MCF 10A (cell line): ENCODE measurements at regions of chr7 and their contacts with region 1.

Region 1: DNA sequence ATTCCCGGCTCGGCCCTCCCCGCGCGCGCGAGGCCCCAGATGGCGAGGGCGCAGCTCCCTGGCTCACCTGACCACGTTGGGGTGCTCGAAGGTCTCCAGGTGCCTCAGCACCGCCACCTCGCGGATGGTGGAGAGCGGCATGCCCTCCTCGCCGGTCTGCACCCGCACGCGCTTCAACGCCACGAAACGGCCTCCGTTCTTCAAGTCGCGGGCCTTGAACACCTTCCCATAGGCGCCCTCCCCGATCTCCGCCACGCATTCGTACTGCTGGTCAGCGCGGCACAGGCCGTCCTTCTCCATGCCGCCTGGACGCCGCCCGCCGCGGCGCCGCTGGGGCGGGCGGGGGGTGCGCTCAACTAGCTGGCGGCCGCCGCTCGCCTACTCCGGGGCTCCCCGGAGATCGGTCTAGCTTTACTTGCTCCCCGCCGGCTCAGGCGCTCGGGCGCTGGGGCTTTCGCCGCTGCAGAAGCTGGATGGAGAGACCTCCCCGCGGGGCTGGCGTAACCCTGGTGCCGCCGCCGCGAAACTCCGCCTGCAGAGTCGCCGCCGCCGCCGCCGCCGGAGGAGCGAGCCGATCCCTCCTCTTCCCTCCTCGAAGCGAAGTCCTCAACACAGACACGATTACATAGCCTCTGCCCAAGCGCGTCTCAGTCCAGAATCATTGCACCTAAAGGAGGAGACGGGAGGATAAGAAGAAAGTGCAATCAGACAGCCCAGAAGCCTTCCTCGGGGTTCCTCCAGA is 3.2 kb downstream of the CDK6 start:
- DNase-seq: peak; percentile 91
- H3K4me3 Mint-ChIP-seq: peak overlapping the region; percentile 83
- H3K27ac Mint-ChIP-seq: peak overlapping the region; percentile 74
- H3K4me1 Mint-ChIP-seq: peaks cover 36% of the 10 kb centered on the region
- H3K27me3 Mint-ChIP-seq: no peaks in the 10 kb centered on the region
- CTCF ChIP-seq: peak; percentile 91

Region 2: GRCh38 chr7:92621026-92621540 is 212.1 kb before region 1 on chr7:
- CTCF ChIA-PET with region 1: interaction called, 48 read pairs
- POLR2A ChIA-PET with region 1: interaction called, 6 read pairs
- intact Hi-C with region 1: loop called (anchors 1 kb)
- DNase-seq: peak; percentile 81
- H3K4me3 Mint-ChIP-seq: peak overlapping the region; percentile 47
- H3K27ac Mint-ChIP-seq: no peak overlapping the region
- H3K4me1 Mint-ChIP-seq: peaks cover 22% of the 10 kb centered on the region
- H3K27me3 Mint-ChIP-seq: no peaks in the 10 kb centered on the region
- CTCF ChIP-seq: peak; percentile 75

Region 3: GRCh38 chr7:92768501-92769393 is 64.4 kb before region 1 on chr7:
- CTCF ChIA-PET with region 1: interaction called, 13 read pairs
- POLR2A ChIA-PET with region 1: interaction called, 19 read pairs
- intact Hi-C with region 1: loop called (anchors 5 kb)
- DNase-seq: peak; percentile 44
- H3K4me3 Mint-ChIP-seq: no peak overlapping the region
- H3K27ac Mint-ChIP-seq: peak overlapping the region; percentile 98
- H3K4me1 Mint-ChIP-seq: peaks cover 47% of the 10 kb centered on the region
- H3K27me3 Mint-ChIP-seq: no peaks in the 10 kb centered on the region
- CTCF ChIP-seq: no peak

Region 4: GRCh38 chr7:92809397-92810241 is 23.6 kb before region 1 on chr7:
- CTCF ChIA-PET with region 1: interaction called, 5 read pairs
- POLR2A ChIA-PET with region 1: interaction called, 12 read pairs
- intact Hi-C with region 1: no loop called
- DNase-seq: peak; percentile 96
- H3K4me3 Mint-ChIP-seq: peak overlapping the region; percentile 35
- H3K27ac Mint-ChIP-seq: peak overlapping the region; percentile 82
- H3K4me1 Mint-ChIP-seq: peaks cover 48% of the 10 kb centered on the region
- H3K27me3 Mint-ChIP-seq: no peaks in the 10 kb centered on the region
- CTCF ChIP-seq: no peak

Region 5: DNA sequence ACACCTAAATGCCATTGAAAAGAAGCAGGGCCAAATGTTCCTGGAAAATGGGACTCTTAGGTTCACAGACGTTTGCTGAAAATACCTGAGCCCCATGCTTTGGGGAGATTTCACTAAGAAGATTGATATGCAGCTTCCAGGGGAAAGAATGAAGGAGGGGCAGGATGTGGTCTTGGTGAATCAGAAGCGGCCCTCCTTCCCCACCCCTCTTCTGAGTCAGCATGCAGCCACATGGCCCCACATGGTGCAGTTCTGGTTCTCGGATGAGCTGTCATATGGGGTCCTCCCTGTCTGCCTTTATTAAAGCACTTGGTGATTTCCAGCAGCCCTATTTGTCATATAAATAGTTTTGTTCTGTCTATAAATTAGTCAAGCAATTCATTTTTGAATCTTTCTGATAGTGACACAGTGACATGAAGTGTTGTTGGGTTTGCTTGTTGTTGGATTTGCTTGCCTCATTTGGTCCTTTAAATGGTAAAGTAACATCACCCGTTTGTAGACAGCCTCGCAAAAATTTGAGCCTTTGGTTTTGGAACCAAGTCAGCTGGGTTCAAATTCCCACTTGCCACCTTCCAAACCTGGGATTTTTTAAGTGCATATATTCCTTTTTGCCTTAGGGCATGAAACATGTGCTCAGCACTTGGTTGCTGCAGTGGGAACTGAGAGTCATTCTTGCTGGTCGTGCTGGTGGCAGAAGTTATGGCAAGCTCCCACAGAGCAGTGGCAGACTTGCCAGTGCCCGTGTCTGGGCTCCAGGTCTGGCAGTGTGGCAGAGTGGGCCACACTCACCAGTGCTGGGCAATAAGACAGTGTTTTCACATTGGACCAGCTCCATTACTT is 71.3 kb after region 1 on chr7:
- CTCF ChIA-PET with region 1: no interaction called
- POLR2A ChIA-PET with region 1: interaction called, 12 read pairs
- intact Hi-C with region 1: loop called (anchors 1 kb)
- DNase-seq: peak; percentile 91
- H3K4me3 Mint-ChIP-seq: peak overlapping the region; percentile 36
- H3K27ac Mint-ChIP-seq: peak overlapping the region; percentile 96
- H3K4me1 Mint-ChIP-seq: peaks cover 29% of the 10 kb centered on the region
- H3K27me3 Mint-ChIP-seq: no peaks in the 10 kb centered on the region
- CTCF ChIP-seq: no peak

Region 6: DNA sequence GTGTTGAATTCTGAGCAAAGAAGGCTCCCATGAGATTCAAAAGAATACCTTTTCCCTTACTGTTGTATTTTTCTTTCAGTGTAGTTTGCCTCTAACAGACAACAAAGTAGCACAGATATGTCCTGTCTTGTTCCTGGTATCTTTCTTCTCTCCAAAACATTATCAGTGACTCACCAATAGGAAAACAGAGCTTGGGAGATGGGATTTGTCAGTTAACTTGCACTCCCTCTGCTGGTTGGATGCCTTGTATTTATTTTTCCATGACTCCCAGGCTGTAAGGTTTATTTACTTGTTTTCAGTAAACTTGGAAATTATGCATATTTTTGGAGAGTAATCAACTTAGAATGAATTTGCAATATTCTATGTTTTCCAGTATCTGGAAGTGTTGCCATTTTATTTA is 154.9 kb after region 1 on chr7:
- CTCF ChIA-PET with region 1: interaction called, 20 read pairs
- POLR2A ChIA-PET with region 1: interaction called, 27 read pairs
- intact Hi-C with region 1: loop called (anchors 1 kb)
- DNase-seq: peak; percentile 45
- H3K4me3 Mint-ChIP-seq: no peak overlapping the region
- H3K27ac Mint-ChIP-seq: peak overlapping the region; percentile 59
- H3K4me1 Mint-ChIP-seq: peaks cover 26% of the 10 kb centered on the region
- H3K27me3 Mint-ChIP-seq: no peaks in the 10 kb centered on the region
- CTCF ChIP-seq: peak; percentile 30

Region 7: GRCh38 chr7:93055543-93056107 is 222.4 kb after region 1 on chr7:
- CTCF ChIA-PET with region 1: interaction called, 5 read pairs
- POLR2A ChIA-PET with region 1: interaction called, 5 read pairs
- intact Hi-C with region 1: loop called (anchors 1 kb)
- DNase-seq: peak; percentile 46
- H3K4me3 Mint-ChIP-seq: no peak overlapping the region
- H3K27ac Mint-ChIP-seq: no peak overlapping the region
- H3K4me1 Mint-ChIP-seq: peaks cover 7% of the 10 kb centered on the region
- H3K27me3 Mint-ChIP-seq: no peaks in the 10 kb centered on the region
- CTCF ChIP-seq: peak; percentile 73

Region 8: GRCh38 chr7:93298671-93299070 is 465.5 kb after region 1 on chr7:
- CTCF ChIA-PET with region 1: no interaction called
- POLR2A ChIA-PET with region 1: no interaction called
- intact Hi-C with region 1: no loop called
- DNase-seq: no peak
- H3K4me3 Mint-ChIP-seq: no peak overlapping the region
- H3K27ac Mint-ChIP-seq: no peak overlapping the region
- H3K4me1 Mint-ChIP-seq: no peaks in the 10 kb centered on the region
- H3K27me3 Mint-ChIP-seq: no peaks in the 10 kb centered on the region
- CTCF ChIP-seq: no peak